PC-3 (cell line): ENCODE measurements at regions of chr1 and their contacts with region 1.

Region 1: GRCh38 chr1:175197536-175197935 is 5.0 kb upstream of the KIAA0040 start:
- DNase-seq: peak; percentile 93
- ATAC-seq: peak; percentile 56
- H3K4me3 ChIP-seq: no peak overlapping the region
- H3K27ac ChIP-seq: peak overlapping the region; percentile 99
- H3K4me1 ChIP-seq: peaks cover 49% of the 10 kb centered on the region
- H3K27me3 ChIP-seq: no peaks in the 10 kb centered on the region
- CTCF ChIP-seq: no peak

Region 2: GRCh38 chr1:174850726-174851125 is 346.8 kb before region 1 on chr1:
- CTCF ChIA-PET with region 1: no interaction called
- POLR2A ChIA-PET with region 1: no interaction called
- intact Hi-C with region 1: no loop called
- DNase-seq: no peak
- ATAC-seq: no peak
- H3K4me3 ChIP-seq: no peak overlapping the region
- H3K27ac ChIP-seq: no peak overlapping the region
- H3K4me1 ChIP-seq: no peaks in the 10 kb centered on the region
- H3K27me3 ChIP-seq: no peaks in the 10 kb centered on the region
- CTCF ChIP-seq: no peak

Region 3: DNA sequence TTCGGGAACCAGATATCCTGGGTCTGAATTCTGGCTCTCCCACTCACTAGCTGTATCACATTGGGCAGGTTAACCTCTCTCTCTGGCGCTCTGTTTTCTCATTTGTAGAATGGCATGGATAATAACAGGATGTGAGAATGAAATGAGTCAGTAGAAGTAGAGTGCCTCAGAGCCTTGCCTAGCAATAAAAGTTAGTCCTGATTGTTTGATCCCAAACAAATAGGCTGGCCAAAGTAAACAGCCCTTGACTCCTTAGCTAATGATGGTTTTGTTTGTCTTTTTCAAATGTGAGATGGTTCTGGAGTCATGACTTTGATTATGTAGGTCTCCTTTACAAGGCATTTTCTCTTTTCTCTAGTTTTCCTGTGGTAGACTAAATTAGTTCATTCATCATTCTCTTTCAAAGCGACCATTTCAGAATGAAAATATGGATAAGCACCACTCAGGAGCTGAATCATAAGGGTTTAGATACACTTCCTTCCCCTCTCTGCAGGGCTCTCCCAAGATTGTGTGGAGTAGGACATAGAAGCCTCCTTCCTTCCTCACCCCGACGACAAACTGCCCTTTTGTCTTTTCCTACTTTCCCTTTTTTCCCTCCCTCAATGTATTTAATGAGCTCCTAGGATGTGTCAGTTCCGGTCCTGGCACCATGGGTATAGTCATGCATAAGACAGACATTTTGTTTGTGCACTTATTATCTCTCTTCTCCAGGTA is 28.1 kb before region 1 on chr1:
- CTCF ChIA-PET with region 1: no interaction called
- POLR2A ChIA-PET with region 1: interaction called, 3 read pairs
- intact Hi-C with region 1: loop called (anchors 1 kb)
- DNase-seq: peak; percentile 88
- ATAC-seq: peak; percentile 92
- H3K4me3 ChIP-seq: peak overlapping the region; percentile 30; the same call in 1 of the 2 replicates
- H3K27ac ChIP-seq: peak overlapping the region; percentile 98
- H3K4me1 ChIP-seq: peaks cover 45% of the 10 kb centered on the region
- H3K27me3 ChIP-seq: no peaks in the 10 kb centered on the region
- CTCF ChIP-seq: no peak